Activated CD4-positive, alpha-beta memory T cell treated with anti-CD3 and anti-CD28 coated beads, Interleukin-2, amount 10 ng/mL, durations not matched to agents 7 days and 5 days (primary cell): ENCODE measurements at regions of chr11 and their contacts with region 1.

Region 1: GRCh38 chr11:75867775-75868374 is 52.9 kb downstream of the UVRAG start:
- DNase-seq: peak; percentile 20
- H3K4me3 Mint-ChIP-seq: no peak overlapping the region
- H3K27ac Mint-ChIP-seq: no peak overlapping the region
- H3K4me1 Mint-ChIP-seq: peaks cover 4% of the 10 kb centered on the region
- H3K27me3 Mint-ChIP-seq: no peaks in the 10 kb centered on the region

Region 2: DNA sequence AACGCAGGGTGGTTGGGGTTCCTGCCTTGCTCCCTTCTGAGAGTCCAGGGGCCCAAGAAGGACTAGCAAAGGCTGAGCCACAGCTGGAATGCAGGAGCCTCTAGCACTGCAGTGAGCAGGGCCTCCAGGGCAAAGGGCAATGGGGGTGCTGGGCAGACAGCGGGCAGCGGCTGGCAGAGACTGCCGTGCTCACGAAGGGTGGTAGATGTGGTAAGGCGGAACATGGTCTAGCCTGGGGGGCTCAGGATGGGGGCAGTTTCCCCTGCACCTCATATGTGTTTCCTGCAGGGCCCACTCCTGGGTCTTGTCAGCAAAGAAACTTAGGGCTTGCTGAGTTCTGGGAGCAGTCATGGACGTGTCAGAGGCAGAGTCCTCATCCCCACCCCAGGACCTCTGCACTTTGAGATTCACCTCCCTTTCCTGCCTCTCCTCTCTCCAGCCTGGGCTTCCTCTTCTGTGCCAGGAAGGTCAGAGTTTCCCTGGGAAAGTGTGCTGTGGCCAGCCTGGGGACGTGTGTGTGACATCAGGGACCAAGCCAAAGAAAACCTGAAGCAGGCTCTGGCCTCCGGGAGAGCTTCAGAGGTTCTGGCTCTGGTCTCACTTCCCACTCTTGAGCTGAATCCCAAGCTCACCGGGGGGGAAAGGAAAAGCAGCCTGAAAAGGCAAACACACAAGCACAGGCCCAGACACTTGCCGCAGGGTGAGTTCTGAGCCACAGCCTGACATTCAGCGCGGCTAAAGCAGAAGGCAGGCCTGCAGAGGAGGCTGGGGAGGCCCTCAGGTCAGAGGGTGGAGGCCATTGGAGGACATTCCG is 145.8 kb before region 1 on chr11:
- CTCF ChIA-PET with region 1: interaction called, 33 read pairs
- POLR2A ChIA-PET with region 1: no interaction called
- DNase-seq: no peak
- H3K4me3 Mint-ChIP-seq: no peak overlapping the region
- H3K27ac Mint-ChIP-seq: no peak overlapping the region
- H3K4me1 Mint-ChIP-seq: peaks cover 2% of the 10 kb centered on the region
- H3K27me3 Mint-ChIP-seq: no peaks in the 10 kb centered on the region

Region 3: GRCh38 chr11:75802913-75803820 is 64.7 kb before region 1 on chr11:
- CTCF ChIA-PET with region 1: interaction called, 101 read pairs
- POLR2A ChIA-PET with region 1: interaction called, 3 read pairs
- DNase-seq: peak; percentile 76
- H3K4me3 Mint-ChIP-seq: no peak overlapping the region
- H3K27ac Mint-ChIP-seq: no peak overlapping the region
- H3K4me1 Mint-ChIP-seq: peaks cover 20% of the 10 kb centered on the region
- H3K27me3 Mint-ChIP-seq: peaks cover 2% of the 10 kb centered on the region